A549 (cell line): ENCODE measurements at regions of chr6 and their contacts with region 1.

Region 1: DNA sequence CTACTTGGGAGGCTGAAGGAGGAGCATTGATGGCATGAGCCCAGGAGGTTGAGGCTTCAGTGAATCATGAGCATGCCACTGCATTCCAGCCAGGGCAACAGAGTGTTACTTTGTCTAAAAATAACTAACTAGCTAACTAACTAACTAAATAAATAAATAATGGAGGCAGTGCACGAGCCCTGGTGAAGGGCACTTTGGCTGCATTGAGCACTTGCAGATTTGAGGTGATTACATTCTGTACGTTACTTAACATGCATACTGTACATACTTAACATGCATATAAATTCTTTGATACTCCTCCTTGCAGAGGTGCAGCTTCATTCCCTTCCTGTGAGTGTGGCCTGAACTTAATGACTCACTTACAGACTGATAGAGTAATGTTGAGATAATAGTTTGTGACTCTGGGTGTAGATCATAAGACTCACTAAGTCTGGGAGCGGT is 10.7 kb downstream of the HLA-A start:
- DNase-seq: peak; percentile 46 to 66
- ATAC-seq: peak; percentile 84 to 86
- H3K4me3 ChIP-seq: no peak overlapping the region
- H3K27ac ChIP-seq: peak overlapping the region; percentile 51 to 73; a peak in 3 of 6 replicates
- H3K4me1 ChIP-seq: peaks cover 12% of the 10 kb centered on the region
- CTCF ChIP-seq: no peak
- EP300 ChIP-seq: no peak
- POLR2A ChIP-seq: no peak
- RAD21 ChIP-seq: no peak

Region 2: DNA sequence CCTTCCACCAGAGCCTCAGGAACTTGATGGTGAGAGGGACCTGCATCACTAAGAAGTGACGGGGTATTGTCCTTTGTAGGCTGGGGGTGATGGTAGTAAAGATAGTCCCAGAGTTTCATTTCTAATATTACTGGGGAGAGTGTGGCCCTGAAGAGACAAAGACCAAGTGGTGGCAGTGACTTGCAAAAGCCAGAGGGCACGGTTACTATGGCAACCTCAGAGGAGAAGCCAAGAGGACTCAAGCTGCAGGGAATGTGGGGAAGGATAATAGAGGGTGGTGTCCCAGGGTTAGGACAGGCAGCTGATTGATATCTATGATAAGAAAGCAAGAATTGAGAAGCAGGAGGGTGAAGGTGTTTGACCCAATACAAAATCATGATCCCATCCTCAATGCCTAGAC is 82.9 kb before region 1 on chr6:
- CTCF ChIA-PET with region 1: no interaction called
- POLR2A ChIA-PET with region 1: no interaction called
- DNase-seq: no peak
- ATAC-seq: no peak
- H3K4me3 ChIP-seq: no peak overlapping the region
- H3K27ac ChIP-seq: no peak overlapping the region
- H3K4me1 ChIP-seq: no peaks in the 10 kb centered on the region
- CTCF ChIP-seq: no peak
- EP300 ChIP-seq: no peak
- POLR2A ChIP-seq: no peak
- RAD21 ChIP-seq: no peak

Region 3: GRCh38 chr6:29964887-29965562 is 12.0 kb after region 1 on chr6:
- CTCF ChIA-PET with region 1: interaction called, 3 read pairs
- POLR2A ChIA-PET with region 1: interaction called, 15 read pairs
- DNase-seq: peak; percentile 46 to 77
- ATAC-seq: peak; percentile 90 to 92
- H3K4me3 ChIP-seq: peak overlapping the region; percentile 74
- H3K27ac ChIP-seq: peak overlapping the region; percentile 94 to 98
- H3K4me1 ChIP-seq: peaks cover 30% of the 10 kb centered on the region
- CTCF ChIP-seq: no peak
- EP300 ChIP-seq: peak in 1 of 2 experiments; percentile 13; a peak in 1 of 5 replicates
- POLR2A ChIP-seq: 0 out of 2 replicates have a peak, but pooled peaks have one; percentile 23
- RAD21 ChIP-seq: no peak